Ascending aorta (tissue), 2 donors: ENCODE measurements at regions of chr4 and their contacts with region 1.

Region 1: DNA sequence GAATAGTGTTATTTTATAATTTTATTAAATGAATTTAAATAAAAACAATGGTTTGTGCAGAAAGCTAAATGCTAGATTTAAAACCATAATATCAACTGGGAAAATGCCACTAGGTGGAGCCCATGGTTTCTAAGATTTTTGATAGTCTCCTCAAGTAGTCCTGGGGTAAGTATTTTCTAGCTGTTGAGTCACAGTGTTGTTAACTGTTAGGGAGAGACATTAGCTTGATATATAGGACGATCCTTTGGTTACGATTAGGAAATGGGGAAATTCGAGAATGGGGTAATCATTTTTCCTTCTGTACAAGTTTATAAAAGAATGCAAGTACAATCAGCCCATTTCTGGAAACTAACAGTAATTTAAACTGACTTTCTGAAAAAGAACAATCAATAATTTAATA is 378.4 kb downstream of the ANKRD50 start:
- DNase-seq: no peak
- H3K4me3 ChIP-seq: no peak overlapping the region
- H3K27ac ChIP-seq: no peak overlapping the region
- H3K4me1 ChIP-seq: no peaks in the 10 kb centered on the region
- H3K27me3 ChIP-seq: no peaks in the 10 kb centered on the region
- CTCF ChIP-seq: peak; percentile 43 to 56 (median 46)

Region 2: GRCh38 chr4:125244848-125245450 is 910.8 kb after region 1 on chr4:
- intact Hi-C with region 1: loop called (anchors 5 kb)
- DNase-seq: no peak
- H3K4me3 ChIP-seq: no peak overlapping the region
- H3K27ac ChIP-seq: no peak overlapping the region
- H3K4me1 ChIP-seq: no peaks in the 10 kb centered on the region
- H3K27me3 ChIP-seq: no peaks in the 10 kb centered on the region
- CTCF ChIP-seq: peak in 2 of 3 experiments; percentile 21 to 40

Region 3: GRCh38 chr4:125283707-125284279 is 949.7 kb after region 1 on chr4:
- intact Hi-C with region 1: loop called (anchors 1 kb)
- DNase-seq: no peak
- H3K4me3 ChIP-seq: no peak overlapping the region
- H3K27ac ChIP-seq: no peak overlapping the region
- H3K4me1 ChIP-seq: no peaks in the 10 kb centered on the region
- H3K27me3 ChIP-seq: no peaks in the 10 kb centered on the region
- CTCF ChIP-seq: peak in 2 of 3 experiments; percentile 61 to 65